Right ventricle myocardium inferior (tissue), 1 donor: ENCODE measurements at regions of chr7 and their contacts with region 1.

Region 1: DNA sequence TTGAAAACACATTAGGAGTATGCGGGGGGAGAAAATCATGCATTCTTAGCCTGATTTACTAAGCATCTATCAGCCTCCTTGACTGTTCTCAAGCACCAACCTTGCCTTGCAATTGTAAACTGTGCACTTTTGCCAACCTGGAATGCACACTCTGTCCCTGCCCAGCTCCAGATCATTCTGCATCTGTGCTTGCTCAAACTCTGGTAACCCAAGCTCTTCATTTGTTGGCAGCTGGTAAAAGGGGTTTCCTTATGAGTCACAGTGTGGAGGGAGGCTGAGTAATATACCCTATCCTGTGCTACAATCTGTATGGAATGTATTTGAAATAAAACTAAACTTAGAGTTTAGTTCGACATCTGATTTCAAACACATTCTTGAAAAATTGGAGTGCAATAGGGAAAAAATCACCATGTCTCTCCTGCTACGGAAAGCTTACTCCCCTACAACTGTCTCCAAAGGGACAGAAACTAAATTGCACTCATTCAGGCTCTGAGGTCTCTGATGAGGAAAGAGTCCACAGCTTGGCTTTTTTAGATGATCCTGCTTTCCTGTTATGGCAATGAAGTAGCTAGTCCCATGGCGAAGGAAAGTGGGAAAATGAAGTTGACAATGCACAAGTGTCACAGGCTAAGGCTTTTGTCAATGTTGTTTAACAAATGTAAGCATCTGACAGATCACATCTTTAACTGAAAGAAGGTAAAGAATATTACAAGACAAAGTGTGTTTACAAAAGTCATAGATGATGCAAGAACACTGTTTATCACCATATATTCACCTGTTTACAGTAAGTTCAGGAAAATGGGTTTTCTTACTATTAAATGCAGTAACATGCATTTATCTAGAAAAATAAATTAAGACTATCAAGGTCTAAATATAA is 61.9 kb downstream of the TES start:
- DNase-seq: no peak
- ATAC-seq: peak; percentile 90

Region 2: GRCh38 chr7:115827305-115828045 is 444.7 kb before region 1 on chr7:
- intact Hi-C with region 1: no loop called
- DNase-seq: no peak
- ATAC-seq: no peak

Region 3: DNA sequence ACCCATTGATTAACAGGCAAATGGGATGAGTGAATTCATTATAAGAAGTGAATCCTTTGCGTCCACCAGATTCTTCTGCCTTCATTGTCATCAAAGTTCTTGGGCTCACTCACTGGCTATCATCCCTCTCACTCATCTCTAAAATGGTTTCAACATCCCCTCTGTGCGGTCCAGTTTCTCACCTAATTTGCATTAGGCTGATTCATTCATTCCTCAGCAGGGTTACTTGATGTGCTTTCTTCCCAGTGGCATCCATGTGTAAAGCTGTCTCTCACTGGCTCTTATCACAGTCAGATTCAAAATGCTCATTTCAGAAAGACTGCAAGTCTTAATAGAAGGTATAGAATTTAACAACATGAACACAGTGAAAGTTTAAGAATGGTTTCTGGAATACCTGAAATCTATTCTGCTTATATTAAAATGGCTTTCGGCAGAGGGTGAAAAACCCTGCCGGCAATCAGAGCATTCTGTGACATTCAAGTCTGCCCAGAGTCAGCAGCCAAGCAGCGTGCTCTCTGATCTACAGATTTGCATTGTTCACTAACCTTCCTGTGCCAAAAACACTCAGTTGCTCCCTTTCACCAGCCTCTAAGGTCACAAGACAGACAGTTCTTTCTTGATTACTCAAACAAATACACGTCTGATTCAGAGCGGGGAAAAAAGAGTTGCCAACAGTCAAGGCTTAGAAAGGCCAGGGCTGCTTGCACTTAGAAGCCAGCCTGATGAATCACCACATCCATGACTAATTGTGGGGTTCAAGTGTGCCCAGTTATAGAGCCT is 44.8 kb after region 1 on chr7:
- intact Hi-C with region 1: loop called (anchors 2 kb)
- DNase-seq: no peak
- ATAC-seq: peak; percentile 86

Region 4: DNA sequence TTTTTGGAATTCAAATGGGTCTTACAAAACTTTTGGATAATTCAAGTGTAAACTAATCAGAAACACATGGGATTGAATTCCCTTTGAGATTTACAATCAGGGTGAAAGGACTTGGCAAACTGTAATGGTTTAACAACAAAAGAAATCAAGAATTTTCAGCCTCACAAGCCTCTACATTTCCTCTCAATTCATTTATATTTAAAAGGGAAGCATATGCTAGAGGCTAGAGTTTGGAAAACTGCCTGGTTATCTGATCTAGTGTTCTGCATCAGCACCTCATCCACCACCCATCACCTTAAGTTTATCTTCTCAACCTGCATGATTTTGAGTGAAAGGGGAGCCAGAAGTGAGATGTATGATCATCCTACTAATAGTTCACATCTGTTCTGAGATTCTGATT is 58.8 kb after region 1 on chr7:
- intact Hi-C with region 1: no loop called
- DNase-seq: no peak
- ATAC-seq: no peak

Region 5: GRCh38 chr7:116363637-116364432 is 91.6 kb after region 1 on chr7:
- intact Hi-C with region 1: no loop called
- DNase-seq: no peak
- ATAC-seq: no peak

Region 6: DNA sequence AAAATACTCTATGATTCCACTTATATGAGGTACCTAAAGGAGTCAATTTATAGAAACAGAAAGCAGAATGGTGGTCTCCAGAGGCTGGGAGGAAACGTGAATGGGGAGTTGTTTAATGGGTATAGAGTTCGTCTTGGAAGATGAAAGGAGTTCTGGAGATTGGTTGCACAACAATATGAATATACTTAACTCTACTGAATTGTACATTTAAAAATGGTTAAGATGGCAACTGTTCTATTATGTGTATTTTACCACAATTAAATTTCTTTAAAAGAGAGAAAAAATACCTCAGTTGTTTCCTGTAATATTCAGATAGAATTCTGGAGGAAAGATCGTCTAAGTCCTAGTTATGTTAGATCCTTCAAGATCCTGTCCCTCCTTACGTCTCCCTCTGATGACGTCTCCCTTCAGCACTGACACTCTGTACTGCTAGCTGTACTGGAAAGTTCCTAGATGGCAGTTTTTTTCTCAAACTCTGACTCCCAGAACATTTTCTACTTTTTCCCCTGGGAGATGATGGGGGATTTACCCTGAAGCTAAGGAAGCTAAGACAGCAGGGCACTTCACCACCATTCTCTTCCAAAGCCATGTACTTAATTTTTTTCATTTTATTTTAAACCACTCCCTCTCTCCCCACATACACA is 174.1 kb after region 1 on chr7:
- intact Hi-C with region 1: loop called (anchors 5 kb)
- DNase-seq: no peak
- ATAC-seq: no peak